OCI-LY7 (cell line): ENCODE measurements at regions of chr2 and their contacts with region 1.

Region 1: DNA sequence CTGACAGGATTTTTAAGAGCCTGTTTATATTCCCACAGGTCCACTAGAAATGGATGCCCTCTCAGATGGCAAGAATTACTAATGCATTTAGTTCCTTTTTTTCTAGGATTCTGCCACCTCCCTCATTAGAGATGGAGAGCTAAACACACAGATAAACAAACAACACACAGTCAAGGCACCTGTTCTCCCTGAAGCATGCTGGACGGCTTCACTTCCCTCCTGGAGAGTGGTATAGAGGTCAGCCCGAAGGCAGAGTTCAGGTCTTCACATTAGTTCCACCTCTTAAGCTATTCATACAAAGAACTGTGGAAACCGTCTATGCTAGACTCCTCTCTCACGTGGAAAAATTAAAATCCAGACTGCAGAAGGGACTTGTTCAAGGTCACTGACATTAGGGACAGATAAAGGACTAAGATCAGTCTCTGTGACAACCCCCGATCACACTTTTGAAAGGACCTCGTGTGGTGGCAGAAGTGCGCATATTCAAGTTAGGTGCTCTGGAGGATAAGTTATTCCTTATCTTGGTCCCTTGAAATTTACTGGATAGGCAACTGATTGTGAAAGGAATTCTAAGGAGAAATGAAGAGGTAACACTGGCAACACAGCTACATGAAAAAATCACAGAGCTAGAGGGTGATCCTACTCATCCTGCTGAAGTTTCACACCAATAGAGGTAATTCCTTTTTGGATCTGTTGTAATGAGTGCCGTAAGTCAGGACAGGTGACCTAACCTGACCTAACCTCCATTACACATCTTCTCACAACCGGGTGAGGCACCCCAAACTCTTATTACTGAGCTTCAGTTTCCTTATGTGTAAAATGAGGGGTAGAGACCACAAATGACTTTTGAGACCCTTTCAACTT is 75.1 kb downstream of the SPRED2 start:
- DNase-seq: peak; percentile 37
- H3K4me3 ChIP-seq: peak overlapping the region; percentile 5
- H3K27ac ChIP-seq: peak overlapping the region; percentile 36
- H3K4me1 ChIP-seq: peaks cover 99% of the 10 kb centered on the region
- CTCF ChIP-seq: no peak

Region 2: DNA sequence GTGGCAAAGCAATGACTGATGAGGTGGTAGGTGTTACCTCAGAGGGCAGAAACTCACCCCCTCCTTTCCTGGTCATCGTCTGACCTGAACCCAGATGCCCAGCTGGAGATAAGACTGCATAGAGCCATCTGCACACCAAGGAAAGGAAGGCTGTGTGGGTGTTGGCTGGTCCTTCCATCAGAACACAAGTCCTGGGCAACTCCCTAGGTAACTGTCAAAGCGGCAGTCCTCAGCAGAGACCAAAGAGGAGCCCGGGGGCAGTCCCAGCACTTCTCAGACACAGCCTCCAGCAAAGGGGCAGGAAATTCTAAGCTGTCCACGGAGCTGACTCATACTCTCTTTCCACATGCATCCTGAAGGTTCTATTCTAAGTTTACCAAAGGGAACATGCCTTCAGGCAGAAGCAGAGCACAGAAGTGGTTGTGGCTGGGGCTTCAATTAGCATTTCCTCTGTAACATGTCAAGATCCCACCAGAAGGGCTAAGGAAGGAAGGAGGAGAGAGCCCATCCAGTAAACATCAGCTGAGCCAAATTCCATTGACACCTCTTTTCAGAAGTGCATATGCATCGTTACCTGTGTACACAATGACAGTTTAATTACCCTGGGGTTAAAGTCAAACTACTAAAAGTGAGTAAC is 20.3 kb after region 1 on chr2:
- CTCF ChIA-PET with region 1: interaction called, 4 read pairs
- POLR2A ChIA-PET with region 1: interaction called, 21 read pairs
- intact Hi-C with region 1: no loop called
- DNase-seq: no peak
- H3K4me3 ChIP-seq: no peak overlapping the region
- H3K27ac ChIP-seq: no peak overlapping the region
- H3K4me1 ChIP-seq: peaks cover 74% of the 10 kb centered on the region
- CTCF ChIP-seq: no peak